ENCODE measurements at regions of chr7 and their contacts with region 1.

Region 1: DNA sequence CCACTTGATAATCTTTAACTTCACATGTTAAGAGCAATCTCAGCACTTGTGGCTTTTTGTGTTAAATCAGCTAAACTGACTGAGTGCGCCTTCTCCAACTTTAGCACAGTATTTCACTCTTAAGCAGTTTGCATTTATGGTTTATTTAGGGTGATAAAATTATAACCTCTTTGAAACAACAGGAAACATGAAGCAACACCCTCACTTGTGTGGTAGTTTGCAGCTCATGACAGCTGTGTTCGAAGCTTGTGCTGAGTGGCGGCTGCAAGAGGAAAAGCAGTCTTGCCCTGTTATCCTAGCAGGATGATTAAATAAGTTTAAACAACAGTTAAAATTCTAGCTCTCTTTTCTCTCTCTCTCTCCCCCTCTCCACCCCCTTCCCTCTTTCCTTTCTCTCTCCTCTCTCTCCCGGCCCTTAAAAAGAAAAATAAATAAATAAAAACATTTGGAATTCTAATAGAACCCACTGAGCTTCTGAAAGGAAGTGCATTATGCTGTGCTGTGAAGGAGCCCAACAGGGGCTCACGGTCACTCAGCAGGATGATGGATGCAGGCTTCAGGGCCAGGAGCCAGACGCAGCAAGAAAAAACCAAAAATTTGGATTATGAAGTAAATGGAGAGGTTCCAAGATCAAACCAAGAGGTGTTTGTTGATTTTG is 25.2 kb downstream of the OGDH start:
- DNase-seq: no peak
- H3K4me3 ChIP-seq: no peak overlapping the region
- H3K27ac ChIP-seq: no peak overlapping the region
- H3K4me1 ChIP-seq: peaks cover 11% of the 10 kb centered on the region
- H3K27me3 ChIP-seq: no peaks in the 10 kb centered on the region
- CTCF ChIP-seq: no peak
- EP300 ChIP-seq: no peak
- POLR2A ChIP-seq: no peak

Region 2: DNA sequence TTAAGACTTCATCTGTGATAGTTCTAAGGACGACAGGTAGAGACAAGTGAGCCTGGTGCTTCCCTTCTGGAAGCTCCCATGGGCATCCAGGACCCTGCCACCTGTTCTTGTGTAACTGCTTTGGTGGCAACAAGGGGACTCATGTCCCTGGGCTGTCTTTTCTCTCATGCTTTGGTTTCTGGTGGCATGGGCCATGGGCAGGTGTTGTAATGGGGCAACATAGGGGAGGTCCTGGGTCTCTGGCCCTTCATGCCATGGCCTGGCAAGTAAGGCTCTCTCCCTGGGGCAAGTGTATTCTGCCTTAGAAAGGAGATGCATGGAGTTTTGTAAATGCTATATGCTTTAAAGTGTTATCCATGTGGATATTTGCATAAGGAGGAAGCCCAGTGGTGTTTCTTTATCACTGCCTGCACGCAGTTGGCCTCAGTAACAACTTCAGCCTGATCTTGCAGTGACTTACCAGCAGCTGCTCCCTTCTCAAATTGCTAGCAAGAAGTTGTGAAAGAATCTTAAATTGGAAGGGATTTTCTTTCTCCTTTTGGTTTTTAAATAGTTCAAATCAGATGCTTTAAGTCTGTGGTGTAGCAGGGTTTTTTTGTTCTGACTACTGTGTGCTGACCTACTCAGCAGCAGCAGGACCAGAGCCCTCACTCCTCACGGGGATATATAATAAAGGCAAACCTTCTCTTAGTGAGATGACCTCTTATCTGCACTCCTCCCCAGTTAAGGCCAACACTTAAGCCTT is 14.8 kb after region 1 on chr7:
- intact Hi-C with region 1: loop called in 1 of 4 experiments (anchors 1 kb)
- DNase-seq: no peak
- H3K4me3 ChIP-seq: no peak overlapping the region
- H3K27ac ChIP-seq: no peak overlapping the region
- H3K4me1 ChIP-seq: peaks cover 8% of the 10 kb centered on the region
- H3K27me3 ChIP-seq: no peaks in the 10 kb centered on the region
- CTCF ChIP-seq: no peak
- EP300 ChIP-seq: no peak
- POLR2A ChIP-seq: no peak

Region 3: GRCh38 chr7:44735403-44736165 is 104.0 kb after region 1 on chr7:
- intact Hi-C with region 1: no loop called
- DNase-seq: no peak
- H3K4me3 ChIP-seq: no peak overlapping the region
- H3K27ac ChIP-seq: no peak overlapping the region
- H3K4me1 ChIP-seq: no peaks in the 10 kb centered on the region
- H3K27me3 ChIP-seq: no peaks in the 10 kb centered on the region
- CTCF ChIP-seq: no peak
- EP300 ChIP-seq: no peak
- POLR2A ChIP-seq: no peak

Region 4: GRCh38 chr7:45944058-45944457 is 1312.5 kb after region 1 on chr7:
- intact Hi-C with region 1: no loop called
- DNase-seq: no peak
- H3K4me3 ChIP-seq: no peak overlapping the region
- H3K27ac ChIP-seq: no peak overlapping the region
- H3K4me1 ChIP-seq: no peaks in the 10 kb centered on the region
- H3K27me3 ChIP-seq: no peaks in the 10 kb centered on the region
- CTCF ChIP-seq: no peak
- EP300 ChIP-seq: no peak
- POLR2A ChIP-seq: no peak